Sciatic nerve (tissue), 2 donors: ENCODE measurements at regions of chr5 and their contacts with region 1.

Region 1: GRCh38 chr5:44441460-44441859 is 52.2 kb upstream of the FGF10 start:
- DNase-seq: no peak
- ATAC-seq: no peak

Region 2: DNA sequence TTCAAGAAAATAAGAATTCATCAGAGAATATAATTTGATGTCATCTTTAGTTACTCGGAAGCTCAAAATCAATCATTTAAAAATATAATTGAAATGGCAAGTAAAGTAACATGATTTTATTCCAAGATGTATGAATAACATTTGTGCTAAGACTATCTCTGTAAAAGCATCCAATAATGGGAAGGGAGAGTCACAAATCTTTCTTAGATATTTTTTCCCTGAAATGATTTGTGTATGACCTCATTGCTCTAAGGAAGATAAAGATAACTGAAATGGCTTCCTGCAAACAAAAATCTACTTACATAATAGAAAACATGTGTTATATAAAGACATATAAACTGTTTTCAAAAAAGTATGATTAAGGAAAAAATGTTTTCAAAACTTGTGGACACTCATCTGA is 45.1 kb after region 1 on chr5:
- intact Hi-C with region 1: loop called (anchors 2 kb)
- DNase-seq: no peak
- ATAC-seq: no peak